ENCODE measurements at regions of chr19 and their contacts with region 1.

Region 1: DNA sequence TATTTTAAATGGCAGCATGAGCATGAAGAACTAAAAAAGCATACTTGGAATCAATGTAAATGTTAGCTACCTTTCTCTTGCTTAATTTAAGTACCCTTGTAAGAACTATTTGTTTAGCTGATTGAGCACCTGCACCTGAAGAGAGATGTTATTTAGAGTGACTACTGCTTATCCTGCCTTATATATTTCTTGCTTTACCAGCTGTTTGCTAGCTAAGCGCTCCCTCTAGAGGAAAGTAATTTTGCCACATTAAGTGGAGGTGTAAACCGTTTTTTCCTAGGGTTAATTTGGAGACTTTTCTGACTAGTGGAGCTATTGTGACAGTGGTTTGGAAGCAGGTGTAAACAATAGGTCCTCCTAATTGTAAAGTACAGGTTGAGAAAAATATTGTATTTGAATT is 19.4 kb upstream of the PSG2 start:
- DNase-seq: no peak
- H3K4me3 ChIP-seq: no peak overlapping the region
- H3K4me1 ChIP-seq: no peaks in the 10 kb centered on the region
- H3K27me3 ChIP-seq: 0 out of 2 replicates have a peak, but pooled peaks cover 5% of the 10 kb centered on the region

Region 2: DNA sequence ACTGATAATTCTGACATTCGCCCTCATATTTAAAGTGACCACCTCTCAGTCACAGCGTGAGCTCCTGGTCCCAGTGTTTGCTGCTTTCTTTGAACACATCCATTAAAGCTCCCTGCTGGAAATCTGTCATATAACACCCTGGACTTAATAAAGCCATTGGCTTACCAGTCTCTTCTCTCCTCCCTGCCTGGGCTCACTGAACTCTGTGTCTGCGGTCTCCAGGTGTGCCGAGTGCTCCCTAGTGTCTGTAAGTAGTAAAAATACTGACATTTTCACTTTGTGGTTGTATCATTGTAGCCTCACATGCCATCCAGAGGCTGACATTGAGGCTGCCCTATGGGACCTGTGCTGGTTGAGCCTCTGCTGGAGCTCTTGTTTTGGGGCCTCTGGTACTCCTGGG is 73.1 kb before region 1 on chr19:
- in situ Hi-C with region 1: no loop called
- DNase-seq: no peak
- H3K4me3 ChIP-seq: no peak overlapping the region
- H3K4me1 ChIP-seq: no peaks in the 10 kb centered on the region
- H3K27me3 ChIP-seq: no peaks in the 10 kb centered on the region

Region 3: GRCh38 chr19:43191191-43191590 is 89.2 kb after region 1 on chr19:
- in situ Hi-C with region 1: loop called (anchors 10 kb)
- DNase-seq: no peak
- H3K4me3 ChIP-seq: no peak overlapping the region
- H3K4me1 ChIP-seq: no peaks in the 10 kb centered on the region
- H3K27me3 ChIP-seq: peaks cover 4% of the 10 kb centered on the region

Region 4: GRCh38 chr19:43305658-43306057 is 203.7 kb after region 1 on chr19:
- in situ Hi-C with region 1: no loop called
- DNase-seq: no peak
- H3K4me3 ChIP-seq: no peak overlapping the region
- H3K4me1 ChIP-seq: no peaks in the 10 kb centered on the region
- H3K27me3 ChIP-seq: 0 out of 2 replicates have a peak, but pooled peaks cover 2% of the 10 kb centered on the region